Activated CD4-positive, alpha-beta memory T cell treated with anti-CD3 and anti-CD28 coated beads, Interleukin-2, amount 10 ng/mL, durations not matched to agents 7 days and 5 days (primary cell): ENCODE measurements at regions of chr10 and their contacts with region 1.

Region 1: GRCh38 chr10:75210282-75211006 is at the start of gene VDAC2:
- DNase-seq: peak; percentile 94
- H3K4me3 Mint-ChIP-seq: peak within 1 kb of the TSS; percentile 94
- H3K27ac Mint-ChIP-seq: peak within 1 kb of the TSS; percentile 100
- H3K4me1 Mint-ChIP-seq: peaks cover 42% of the 10 kb centered on the region
- H3K27me3 Mint-ChIP-seq: no peaks in the 10 kb centered on the region
- total RNA-seq, gene VDAC2: 128 to 133 TPM

Region 2: GRCh38 chr10:74826142-74827044 is 384.1 kb before region 1 on chr10 and contains the start of gene KAT6B:
- CTCF ChIA-PET with region 1: no interaction called
- POLR2A ChIA-PET with region 1: no interaction called
- DNase-seq: peak; percentile 100
- H3K4me3 Mint-ChIP-seq: peak within 1 kb of the TSS; percentile 81
- H3K27ac Mint-ChIP-seq: peak within 1 kb of the TSS; percentile 94
- H3K4me1 Mint-ChIP-seq: peaks cover 51% of the 10 kb centered on the region
- H3K27me3 Mint-ChIP-seq: no peaks in the 10 kb centered on the region
- total RNA-seq, gene KAT6B: 20.2 to 21.8 TPM

Region 3: GRCh38 chr10:75111367-75111906 is 99.0 kb before region 1 on chr10 and contains the start of gene SAMD8:
- CTCF ChIA-PET with region 1: interaction called, 5 read pairs
- POLR2A ChIA-PET with region 1: interaction called, 54 read pairs
- DNase-seq: peak; percentile 98
- H3K4me3 Mint-ChIP-seq: peak within 1 kb of the TSS; percentile 80
- H3K27ac Mint-ChIP-seq: peak within 1 kb of the TSS; percentile 86
- H3K4me1 Mint-ChIP-seq: peaks cover 51% of the 10 kb centered on the region
- H3K27me3 Mint-ChIP-seq: no peaks in the 10 kb centered on the region
- total RNA-seq, gene SAMD8: 13.9 to 14.1 TPM

Region 4: GRCh38 chr10:75165684-75166622 is 44.5 kb before region 1 on chr10:
- CTCF ChIA-PET with region 1: no interaction called
- POLR2A ChIA-PET with region 1: interaction called, 10 read pairs
- DNase-seq: no peak
- H3K4me3 Mint-ChIP-seq: peak overlapping the region; percentile 5
- H3K27ac Mint-ChIP-seq: peak overlapping the region; percentile 76
- H3K4me1 Mint-ChIP-seq: peaks cover 29% of the 10 kb centered on the region
- H3K27me3 Mint-ChIP-seq: no peaks in the 10 kb centered on the region

Region 5: DNA sequence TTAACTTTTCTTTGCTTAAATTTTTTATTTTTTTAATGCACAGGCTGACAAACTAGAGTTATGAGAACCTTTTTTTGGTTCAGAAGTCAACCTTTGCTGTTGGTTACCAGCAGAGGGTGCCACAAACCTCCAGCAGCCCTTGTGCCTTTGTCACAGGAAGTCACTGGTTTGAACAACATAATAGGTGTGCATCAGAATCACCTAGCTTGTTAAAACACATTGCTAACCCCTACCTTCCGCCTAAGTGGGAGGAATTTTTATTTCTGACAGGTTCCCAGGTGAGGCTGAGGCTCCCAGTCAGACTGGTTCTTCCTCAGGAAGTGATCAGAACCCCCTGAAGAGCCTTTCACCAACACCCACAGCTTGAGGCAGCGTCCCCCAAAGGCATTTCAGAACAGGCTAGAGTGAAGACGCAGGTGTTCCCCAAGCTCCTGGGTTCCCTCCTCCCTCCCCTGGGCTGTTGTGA is 22.4 kb before region 1 on chr10:
- CTCF ChIA-PET with region 1: interaction called, 54 read pairs
- POLR2A ChIA-PET with region 1: interaction called, 31 read pairs
- DNase-seq: peak; percentile 74
- H3K4me3 Mint-ChIP-seq: no peak overlapping the region
- H3K27ac Mint-ChIP-seq: no peak overlapping the region
- H3K4me1 Mint-ChIP-seq: peaks cover 11% of the 10 kb centered on the region
- H3K27me3 Mint-ChIP-seq: no peaks in the 10 kb centered on the region

Region 6: DNA sequence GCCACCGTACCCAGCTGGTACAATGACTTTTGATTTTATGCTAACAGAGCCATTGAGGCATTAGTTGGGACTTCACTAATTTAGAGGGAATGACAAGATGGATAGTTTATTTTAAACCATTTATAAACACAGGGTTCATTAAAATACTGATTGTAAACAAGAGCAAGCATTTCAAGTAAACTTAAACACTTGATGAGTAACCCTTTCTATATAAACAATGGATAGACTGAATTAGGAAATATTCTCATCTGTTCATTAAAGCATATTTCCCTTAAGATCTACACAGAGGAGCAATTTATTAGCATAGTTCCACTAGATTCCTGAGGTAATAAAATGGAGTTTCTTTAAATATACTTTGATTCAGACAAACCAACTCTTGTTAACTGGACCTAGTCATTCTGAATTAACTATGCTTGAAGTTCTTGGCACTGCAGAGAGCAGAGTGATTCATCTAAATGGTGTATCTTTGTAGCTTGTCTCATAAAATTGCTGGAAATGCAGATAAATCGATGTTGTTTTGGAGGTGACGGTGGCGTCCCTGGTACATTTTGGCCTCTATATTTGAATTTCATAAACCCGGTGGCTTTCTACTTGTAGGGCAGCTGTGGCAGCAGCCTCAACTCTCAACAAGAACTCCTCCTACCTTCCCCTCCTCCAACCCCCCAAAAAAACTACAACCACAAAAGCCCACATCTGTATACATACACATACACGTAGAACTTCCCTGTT is 15.2 kb before region 1 on chr10:
- CTCF ChIA-PET with region 1: interaction called, 5 read pairs
- POLR2A ChIA-PET with region 1: interaction called, 21 read pairs
- DNase-seq: no peak
- H3K4me3 Mint-ChIP-seq: no peak overlapping the region
- H3K27ac Mint-ChIP-seq: no peak overlapping the region
- H3K4me1 Mint-ChIP-seq: no peaks in the 10 kb centered on the region
- H3K27me3 Mint-ChIP-seq: no peaks in the 10 kb centered on the region

Region 7: DNA sequence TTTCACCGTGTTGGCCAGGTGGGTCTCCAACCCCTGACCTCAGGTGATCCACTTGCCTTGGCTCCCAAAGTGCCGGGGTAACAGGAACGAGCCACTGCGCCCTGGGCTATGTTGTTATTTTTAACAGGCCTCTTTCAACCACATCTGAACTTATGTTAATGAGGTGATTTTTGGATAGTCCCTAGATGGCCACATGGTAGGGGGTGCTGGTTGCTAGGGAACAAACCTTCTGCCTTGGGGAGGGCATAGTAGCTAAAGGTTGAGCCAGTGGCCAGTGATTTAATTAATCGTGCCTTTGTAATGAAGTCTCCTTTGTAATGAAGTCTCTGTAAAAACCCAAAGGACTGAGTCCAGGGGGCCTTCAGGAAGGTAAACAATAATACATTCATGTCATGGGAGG is 16.2 kb after region 1 on chr10:
- CTCF ChIA-PET with region 1: interaction called, 130 read pairs
- POLR2A ChIA-PET with region 1: interaction called, 193 read pairs
- DNase-seq: no peak
- H3K4me3 Mint-ChIP-seq: no peak overlapping the region
- H3K27ac Mint-ChIP-seq: peak overlapping the region; percentile 16
- H3K4me1 Mint-ChIP-seq: peaks cover 50% of the 10 kb centered on the region
- H3K27me3 Mint-ChIP-seq: no peaks in the 10 kb centered on the region